OCI-LY7 (cell line): ENCODE measurements at regions of chr4 and their contacts with region 1.

Region 1: DNA sequence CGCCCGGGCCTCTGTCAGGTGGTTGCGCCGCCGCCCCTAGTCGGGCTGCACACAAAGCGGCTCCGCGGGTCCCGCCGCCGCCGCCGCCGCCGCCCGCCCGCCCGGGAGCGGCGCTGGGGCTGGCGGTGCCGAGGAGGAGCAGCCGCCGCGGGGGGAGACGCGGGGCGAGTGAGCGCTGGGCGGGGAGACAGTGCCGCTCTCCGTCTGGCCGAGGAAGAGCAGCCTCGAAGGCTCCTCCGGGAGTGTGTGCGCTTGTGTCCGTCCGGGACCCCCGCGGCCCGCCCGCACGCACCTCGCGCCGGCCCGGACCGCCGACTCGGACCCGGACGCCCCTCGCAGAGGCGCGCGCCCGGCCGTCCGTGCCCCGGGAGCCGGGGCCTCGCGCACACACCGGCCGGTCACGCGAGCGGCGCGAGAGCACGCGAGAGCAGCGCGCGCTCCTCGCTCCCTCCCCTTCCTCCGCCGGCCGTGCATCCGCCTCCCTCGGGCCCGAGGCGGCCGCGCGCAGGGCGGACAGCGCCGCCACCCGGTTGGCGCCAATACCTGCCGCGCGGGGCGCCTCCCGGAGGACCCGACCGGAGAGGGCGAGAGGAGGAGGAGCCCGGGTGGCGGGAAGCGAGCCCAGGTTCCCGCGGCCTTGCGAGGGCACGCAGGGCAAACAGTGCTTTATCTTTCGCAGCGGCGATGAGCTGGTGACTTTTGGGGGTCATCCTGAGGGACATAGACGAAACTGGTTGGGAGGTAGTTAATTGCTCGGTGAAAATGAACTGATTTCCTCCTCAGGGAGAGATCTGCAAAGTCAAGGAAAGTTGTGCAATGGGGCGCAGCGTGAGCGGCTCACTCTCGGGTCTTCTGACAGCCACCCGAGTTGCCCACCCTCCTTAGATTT is at the start of gene PDS5A:
- DNase-seq: peak; percentile 96
- H3K4me3 ChIP-seq: peak within 1 kb of the TSS; percentile 86
- H3K27ac ChIP-seq: peak within 1 kb of the TSS; percentile 86
- H3K4me1 ChIP-seq: peaks cover 25% of the 10 kb centered on the region
- CTCF ChIP-seq: peak; percentile 80
- total RNA-seq, gene PDS5A: 65.3 and 69.5 TPM in 2 replicates

Region 2: DNA sequence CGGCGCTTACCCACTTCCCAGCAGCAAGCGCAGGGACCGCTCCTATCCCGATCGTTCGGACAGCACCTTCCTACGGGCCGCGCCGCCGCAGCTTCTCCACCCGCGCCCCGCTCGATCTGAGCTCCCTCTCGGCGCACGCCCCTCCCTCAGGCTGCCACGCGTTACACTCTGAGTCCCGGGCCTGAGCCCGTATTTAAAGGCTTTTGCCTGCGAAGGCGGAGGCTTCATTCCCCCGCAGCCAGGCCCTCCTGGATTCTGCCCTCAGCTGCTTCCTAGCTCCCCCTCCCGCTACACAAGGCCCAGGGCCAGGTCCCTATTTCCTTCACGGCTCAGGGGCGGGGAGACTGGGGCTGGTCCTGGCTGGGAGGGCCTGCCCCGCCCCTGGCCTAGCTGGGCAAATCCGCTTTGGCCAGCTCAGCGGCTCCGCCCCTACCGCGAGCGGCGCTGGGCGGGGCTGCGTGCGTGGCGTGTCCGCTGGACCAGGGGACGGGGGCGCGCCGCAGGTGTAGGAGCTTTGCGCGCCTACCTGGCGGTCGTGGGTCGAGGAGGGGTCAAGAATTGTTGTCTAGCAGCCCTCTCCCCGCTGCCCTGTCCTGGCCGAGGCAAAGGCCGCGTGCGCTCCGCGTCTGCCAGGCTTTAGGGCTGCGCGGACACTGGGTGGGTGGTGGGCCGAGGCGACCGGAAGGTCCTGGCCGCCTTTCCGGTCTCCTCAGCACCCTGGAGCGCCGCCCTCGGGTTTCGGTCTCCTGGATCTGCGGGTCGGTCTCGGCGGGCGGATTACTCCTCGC is 450.3 kb before region 1 on chr4 and contains the start of gene UGDH:
- CTCF ChIA-PET with region 1: no interaction called
- POLR2A ChIA-PET with region 1: no interaction called
- intact Hi-C with region 1: loop called (anchors 2 kb)
- DNase-seq: peak; percentile 95
- H3K4me3 ChIP-seq: peak within 1 kb of the TSS; percentile 80
- H3K27ac ChIP-seq: no peak within 1 kb of the TSS
- H3K4me1 ChIP-seq: peaks cover 16% of the 10 kb centered on the region
- CTCF ChIP-seq: no peak; the same call in 1 of the 2 replicates
- total RNA-seq, gene UGDH: 8.1 and 9.8 TPM in 2 replicates

Region 3: GRCh38 chr4:39697740-39698423 is 279.9 kb before region 1 on chr4 and contains the start of gene UBE2K:
- CTCF ChIA-PET with region 1: no interaction called
- POLR2A ChIA-PET with region 1: interaction called, 5 read pairs
- intact Hi-C with region 1: loop called (anchors 1 kb)
- DNase-seq: peak; percentile 93
- H3K4me3 ChIP-seq: peak within 1 kb of the TSS; percentile 98
- H3K27ac ChIP-seq: peak within 1 kb of the TSS; percentile 74
- H3K4me1 ChIP-seq: peaks cover 29% of the 10 kb centered on the region
- CTCF ChIP-seq: no peak
- total RNA-seq, gene UBE2K: 20.8 and 47.7 TPM in 2 replicates

Region 4: DNA sequence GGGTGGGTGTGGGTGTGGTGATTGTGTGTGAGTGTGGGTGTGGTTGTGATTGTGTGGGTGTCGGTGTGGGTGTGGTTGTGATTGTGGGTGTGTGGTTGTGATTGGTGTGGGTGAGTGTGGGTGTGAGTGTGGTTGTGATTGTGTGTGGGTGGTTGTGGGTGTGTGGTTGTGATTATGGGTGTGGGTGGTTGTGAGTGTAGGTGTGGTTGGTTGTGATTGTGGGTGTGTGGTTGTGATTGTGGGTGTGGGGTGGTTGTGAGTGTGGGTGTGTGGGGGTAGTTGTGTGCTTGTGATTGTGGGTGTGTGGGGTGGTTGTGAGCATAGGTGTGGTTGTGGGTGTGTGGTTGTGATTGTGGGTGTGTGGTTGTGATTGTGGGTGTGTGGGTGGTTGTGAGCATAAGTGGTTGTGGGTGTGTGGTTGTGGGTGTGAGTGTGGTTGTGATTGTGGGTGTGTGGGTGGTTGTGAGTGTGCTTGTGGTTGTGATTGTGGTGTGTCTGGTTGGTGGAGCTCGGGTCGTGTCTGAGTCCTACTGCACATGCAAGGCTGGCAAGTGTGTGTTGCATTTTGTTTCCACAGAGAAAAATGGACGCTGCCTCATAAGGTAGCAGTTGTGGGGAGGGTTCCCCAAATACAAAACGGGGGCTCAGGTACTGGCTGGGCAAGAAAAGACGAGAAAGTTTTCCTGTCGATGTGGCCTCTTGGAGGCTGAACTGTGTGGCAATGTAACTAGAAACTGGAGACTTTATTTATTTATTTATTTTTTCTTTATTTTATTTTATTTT is 163.1 kb before region 1 on chr4:
- CTCF ChIA-PET with region 1: no interaction called
- POLR2A ChIA-PET with region 1: no interaction called
- intact Hi-C with region 1: loop called (anchors 2 kb)
- DNase-seq: peak; percentile 16
- H3K4me3 ChIP-seq: no peak overlapping the region
- H3K27ac ChIP-seq: no peak overlapping the region
- H3K4me1 ChIP-seq: no peaks in the 10 kb centered on the region
- CTCF ChIP-seq: no peak

Region 5: DNA sequence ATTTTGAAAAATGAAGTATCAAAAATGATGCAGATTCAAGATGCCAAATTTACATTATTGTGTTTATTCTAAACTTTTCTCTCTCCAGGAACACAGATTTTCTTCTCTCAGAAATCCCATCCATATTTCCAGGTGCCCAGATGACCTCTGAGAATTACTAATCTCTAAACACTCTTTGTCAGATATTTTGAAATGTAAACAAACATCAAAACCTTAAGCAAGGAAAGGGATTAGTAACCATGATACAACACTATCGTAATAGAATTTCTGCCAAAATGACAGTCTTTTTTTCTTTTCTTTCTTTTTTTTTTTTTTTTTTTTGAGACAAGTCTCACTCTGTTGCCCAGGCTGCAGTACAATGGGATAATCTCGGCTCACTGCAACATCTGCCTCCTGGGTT is 76.8 kb before region 1 on chr4:
- CTCF ChIA-PET with region 1: no interaction called
- POLR2A ChIA-PET with region 1: no interaction called
- intact Hi-C with region 1: loop called (anchors 5 kb)
- DNase-seq: no peak
- H3K4me3 ChIP-seq: no peak overlapping the region
- H3K27ac ChIP-seq: no peak overlapping the region
- H3K4me1 ChIP-seq: no peaks in the 10 kb centered on the region
- CTCF ChIP-seq: no peak

Region 6: DNA sequence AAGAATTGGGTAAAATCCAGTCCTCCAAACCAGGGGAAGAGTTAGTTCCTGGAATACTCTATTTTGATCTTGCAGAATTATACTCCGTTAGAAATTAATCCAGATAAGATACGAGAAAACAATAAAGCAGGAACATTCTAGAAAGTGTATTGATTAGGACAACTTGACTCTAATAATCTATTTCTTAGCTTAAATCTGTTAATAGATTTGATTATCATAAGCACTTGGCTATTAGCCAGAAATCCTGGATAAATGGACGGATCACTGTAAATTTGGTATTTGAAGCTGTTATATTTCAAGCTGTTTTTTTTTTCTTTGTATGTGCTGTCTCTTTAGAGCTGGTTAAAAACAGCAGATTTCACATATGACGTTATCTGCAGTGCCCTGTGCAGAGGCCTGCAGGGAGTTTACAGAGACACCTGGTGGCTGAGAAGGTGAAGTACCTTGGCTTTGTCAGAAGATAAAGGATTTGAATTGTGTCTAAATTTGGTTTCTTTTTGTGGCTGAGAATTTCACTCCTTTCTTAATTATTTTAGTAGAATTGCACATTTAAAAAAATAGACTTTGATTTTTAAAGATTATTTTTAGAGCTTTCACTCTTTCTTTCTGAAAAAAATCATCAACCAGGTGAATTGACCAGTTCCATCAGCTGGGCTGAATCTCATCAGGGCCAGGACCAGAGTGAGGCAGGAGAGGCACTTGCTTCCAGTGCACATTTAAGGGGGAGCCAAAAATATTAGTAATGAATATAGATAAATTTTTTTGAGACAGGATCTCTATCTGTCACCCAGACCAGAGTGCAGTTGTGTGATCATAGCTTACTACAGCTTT is 347.7 kb after region 1 on chr4:
- CTCF ChIA-PET with region 1: no interaction called
- POLR2A ChIA-PET with region 1: no interaction called
- intact Hi-C with region 1: loop called (anchors 5 kb)
- DNase-seq: peak; percentile 85
- H3K4me3 ChIP-seq: no peak overlapping the region
- H3K27ac ChIP-seq: no peak overlapping the region
- H3K4me1 ChIP-seq: peaks cover 4% of the 10 kb centered on the region
- CTCF ChIP-seq: peak; percentile 99

Region 7: GRCh38 chr4:40769266-40769665 is 791.5 kb after region 1 on chr4:
- CTCF ChIA-PET with region 1: no interaction called
- POLR2A ChIA-PET with region 1: no interaction called
- intact Hi-C with region 1: no loop called
- DNase-seq: no peak
- H3K4me3 ChIP-seq: no peak overlapping the region
- H3K27ac ChIP-seq: no peak overlapping the region
- H3K4me1 ChIP-seq: no peaks in the 10 kb centered on the region
- CTCF ChIP-seq: no peak